ENCODE measurements at regions of chrX and their contacts with region 1.

Region 1: GRCh38 chrX:101799387-101799786 is 132.4 kb downstream of the ZMAT1 start:
- DNase-seq: peak; percentile 80
- ATAC-seq: peak; percentile 100
- H3K4me3 ChIP-seq: no peak overlapping the region
- H3K27ac ChIP-seq: no peak overlapping the region
- H3K4me1 ChIP-seq: no peaks in the 10 kb centered on the region
- H3K27me3 ChIP-seq: 0 out of 2 replicates have a peak, but pooled peaks cover 2% of the 10 kb centered on the region
- CTCF ChIP-seq: peak; percentile 70
- POLR2A ChIP-seq: no peak
- RAD21 ChIP-seq: peak; percentile 47

Region 2: DNA sequence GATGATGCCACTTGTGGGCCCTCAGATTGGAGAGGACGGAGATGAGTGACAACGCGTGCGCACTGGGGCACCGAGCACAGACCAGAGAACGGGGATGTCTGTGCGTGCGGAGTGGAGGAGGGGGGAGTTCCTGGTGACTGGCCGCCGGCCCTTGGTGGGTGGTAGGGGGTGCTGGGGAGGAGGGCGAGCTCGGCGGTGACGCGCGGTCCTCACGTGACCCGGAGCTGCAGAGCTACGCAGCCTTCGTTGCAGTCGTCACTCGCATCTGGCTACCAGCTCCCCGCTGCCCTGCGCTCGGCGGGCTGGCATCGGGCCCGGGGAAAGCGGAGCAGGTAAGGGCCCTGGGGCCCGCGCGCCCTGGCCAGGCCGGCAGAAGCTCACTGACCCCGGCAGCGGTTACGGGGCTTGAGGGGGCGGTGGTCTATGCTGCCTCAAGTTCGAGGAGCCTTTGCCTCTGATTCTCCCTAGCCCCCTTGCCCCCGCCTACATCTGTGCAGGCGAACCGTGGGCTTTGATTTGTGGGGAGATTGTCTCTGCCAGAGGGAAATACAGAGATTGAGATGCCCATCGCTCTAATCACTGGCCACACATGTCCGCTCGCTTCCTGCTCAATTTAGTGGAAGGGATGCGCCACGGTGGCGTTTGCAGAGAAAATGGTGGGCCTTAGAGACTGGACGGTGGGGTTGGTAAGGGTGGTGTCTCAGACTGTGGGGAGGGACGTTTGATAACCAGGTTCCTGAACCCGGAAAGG is 314.0 kb before region 1 on chrX and contains the start of gene ARMCX4:
- CTCF ChIA-PET with region 1: no interaction called
- POLR2A ChIA-PET with region 1: no interaction called
- dilution Hi-C with region 1: no loop called
- in situ Hi-C with region 1: no loop called
- intact Hi-C with region 1: no loop called
- DNase-seq: peak; percentile 62
- ATAC-seq: peak; percentile 90
- H3K4me3 ChIP-seq: peak within 1 kb of the TSS; percentile 45
- H3K27ac ChIP-seq: peak within 1 kb of the TSS; percentile 25; the same call in 1 of the 2 replicates
- H3K4me1 ChIP-seq: no peaks in the 10 kb centered on the region
- H3K27me3 ChIP-seq: no peaks in the 10 kb centered on the region
- CTCF ChIP-seq: no peak
- POLR2A ChIP-seq: 0 out of 2 replicates have a peak, but pooled peaks have one; percentile 41
- RAD21 ChIP-seq: no peak
- total RNA-seq, gene ARMCX4: 2.3 and 3.1 TPM in 2 replicates

Region 3: GRCh38 chrX:101595739-101596419 is 203.5 kb before region 1 on chrX:
- CTCF ChIA-PET with region 1: interaction called, 4 read pairs
- POLR2A ChIA-PET with region 1: no interaction called
- dilution Hi-C with region 1: no loop called
- in situ Hi-C with region 1: loop called (anchors 5 kb)
- intact Hi-C with region 1: loop called (anchors 5 kb)
- DNase-seq: peak; percentile 75
- ATAC-seq: peak; percentile 87
- H3K4me3 ChIP-seq: no peak overlapping the region
- H3K27ac ChIP-seq: no peak overlapping the region
- H3K4me1 ChIP-seq: no peaks in the 10 kb centered on the region
- H3K27me3 ChIP-seq: peaks cover 19% of the 10 kb centered on the region
- CTCF ChIP-seq: peak; percentile 78
- POLR2A ChIP-seq: no peak
- RAD21 ChIP-seq: peak; percentile 85

Region 4: GRCh38 chrX:101736651-101737050 is 62.7 kb before region 1 on chrX:
- CTCF ChIA-PET with region 1: no interaction called
- POLR2A ChIA-PET with region 1: no interaction called
- dilution Hi-C with region 1: no loop called
- in situ Hi-C with region 1: no loop called
- intact Hi-C with region 1: no loop called
- DNase-seq: no peak
- ATAC-seq: no peak
- H3K4me3 ChIP-seq: no peak overlapping the region
- H3K27ac ChIP-seq: no peak overlapping the region
- H3K4me1 ChIP-seq: no peaks in the 10 kb centered on the region
- H3K27me3 ChIP-seq: no peaks in the 10 kb centered on the region
- CTCF ChIP-seq: no peak
- POLR2A ChIP-seq: no peak
- RAD21 ChIP-seq: no peak

Region 5: GRCh38 chrX:102008901-102009300 is 209.5 kb after region 1 on chrX:
- CTCF ChIA-PET with region 1: no interaction called
- POLR2A ChIA-PET with region 1: no interaction called
- dilution Hi-C with region 1: no loop called
- in situ Hi-C with region 1: no loop called
- intact Hi-C with region 1: no loop called
- DNase-seq: no peak
- ATAC-seq: no peak
- H3K4me3 ChIP-seq: no peak overlapping the region
- H3K27ac ChIP-seq: no peak overlapping the region
- H3K4me1 ChIP-seq: no peaks in the 10 kb centered on the region
- H3K27me3 ChIP-seq: no peaks in the 10 kb centered on the region
- CTCF ChIP-seq: no peak
- POLR2A ChIP-seq: no peak
- RAD21 ChIP-seq: no peak

Measured in IMR-90 (cell line).